B cell (primary cell): ENCODE measurements at regions of chr11 and their contacts with region 1.

Region 1: DNA sequence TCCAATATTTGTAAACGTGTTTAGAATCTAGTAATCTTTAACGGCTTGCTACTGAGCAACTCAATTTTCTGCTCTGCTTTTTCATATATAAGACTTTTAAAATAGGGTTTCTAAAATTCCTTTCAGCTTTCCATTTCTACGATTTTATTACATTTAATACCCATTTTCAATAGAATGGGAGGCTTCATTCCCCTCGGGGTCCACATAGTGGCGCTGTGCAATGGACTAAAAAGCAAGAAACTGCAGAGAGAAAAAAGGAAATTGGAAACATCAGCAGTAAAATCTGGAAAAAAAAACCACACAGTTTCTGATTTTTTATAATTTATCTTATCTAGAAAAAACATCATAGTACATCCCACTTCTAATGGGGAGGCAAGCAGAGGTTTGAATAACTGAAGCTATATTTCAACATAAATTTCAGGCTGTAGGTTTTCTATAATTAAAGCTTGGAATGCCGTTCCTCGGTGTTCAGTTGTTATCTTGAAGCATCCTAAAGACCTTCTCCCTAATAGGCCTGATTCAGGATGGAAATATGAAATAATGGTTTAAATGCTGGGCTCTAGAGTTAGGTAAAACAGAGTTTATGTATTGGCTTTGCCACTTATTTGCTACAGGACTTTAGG is 18.7 kb upstream of the JHY start:
- DNase-seq: peak; percentile 56
- ATAC-seq: peak; percentile 31
- H3K4me3 ChIP-seq: no peak overlapping the region
- H3K4me3 Mint-ChIP-seq: no peak overlapping the region
- H3K27ac ChIP-seq: no peak overlapping the region
- H3K27ac Mint-ChIP-seq: no peak overlapping the region
- H3K4me1 ChIP-seq: peaks cover 0 to 8% of the 10 kb centered on the region in 2 donors
- H3K4me1 Mint-ChIP-seq: peaks cover 10% of the 10 kb centered on the region
- H3K27me3 ChIP-seq: peaks cover 0 to 24% (median 6%) of the 10 kb centered on the region in 4 experiments
- H3K27me3 Mint-ChIP-seq: peaks cover 60% of the 10 kb centered on the region
- CTCF ChIP-seq: peak; percentile 94

Region 2: GRCh38 chr11:122598971-122599370 is 264.8 kb before region 1 on chr11:
- CTCF ChIA-PET with region 1: no interaction called
- POLR2A ChIA-PET with region 1: no interaction called
- intact Hi-C with region 1: no loop called
- DNase-seq: no peak
- ATAC-seq: no peak
- H3K4me3 ChIP-seq: no peak overlapping the region
- H3K4me3 Mint-ChIP-seq: no peak overlapping the region
- H3K27ac ChIP-seq: no peak overlapping the region
- H3K27ac Mint-ChIP-seq: no peak overlapping the region
- H3K4me1 ChIP-seq: no peaks in the 10 kb centered on the region
- H3K4me1 Mint-ChIP-seq: no peaks in the 10 kb centered on the region
- H3K27me3 ChIP-seq: peaks cover 0 to 8% (median 1%) of the 10 kb centered on the region in 4 experiments
- H3K27me3 Mint-ChIP-seq: peaks cover 26% of the 10 kb centered on the region
- CTCF ChIP-seq: no peak

Region 3: GRCh38 chr11:122808478-122808869 is 55.3 kb before region 1 on chr11:
- CTCF ChIA-PET with region 1: no interaction called
- POLR2A ChIA-PET with region 1: no interaction called
- intact Hi-C with region 1: no loop called
- DNase-seq: peak; percentile 33
- ATAC-seq: no peak
- H3K4me3 ChIP-seq: peak overlapping the region in 2 of 5 experiments; percentile 1 to 10
- H3K4me3 Mint-ChIP-seq: peak overlapping the region; percentile 36
- H3K27ac ChIP-seq: no peak overlapping the region
- H3K27ac Mint-ChIP-seq: peak overlapping the region; percentile 1
- H3K4me1 ChIP-seq: peaks cover 34 to 39% of the 10 kb centered on the region in 2 donors
- H3K4me1 Mint-ChIP-seq: peaks cover 48% of the 10 kb centered on the region
- H3K27me3 ChIP-seq: no peaks in the 10 kb centered on the region
- H3K27me3 Mint-ChIP-seq: no peaks in the 10 kb centered on the region
- CTCF ChIP-seq: no peak

Region 4: DNA sequence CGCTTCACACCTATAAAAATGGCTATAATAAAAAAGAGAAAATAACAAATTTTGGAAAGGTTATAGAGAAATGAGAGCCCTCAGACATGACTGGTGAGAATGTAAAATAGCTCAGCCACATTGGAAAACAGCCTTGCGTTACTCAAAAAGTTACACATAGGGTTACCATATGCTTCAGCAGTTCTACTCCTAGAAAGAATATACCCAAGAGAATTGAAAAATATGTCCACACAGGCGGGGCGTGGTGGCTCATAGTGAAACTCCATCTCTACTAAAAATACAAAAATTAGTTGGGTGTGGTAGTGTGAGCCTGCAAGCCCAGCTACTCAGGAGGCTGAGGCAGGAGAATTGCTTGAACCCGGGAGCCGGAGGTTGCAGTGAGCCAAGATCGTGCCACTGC is 11.2 kb after region 1 on chr11:
- CTCF ChIA-PET with region 1: interaction called, 10 read pairs
- POLR2A ChIA-PET with region 1: no interaction called
- intact Hi-C with region 1: no loop called
- DNase-seq: no peak
- ATAC-seq: no peak
- H3K4me3 ChIP-seq: no peak overlapping the region
- H3K4me3 Mint-ChIP-seq: no peak overlapping the region
- H3K27ac ChIP-seq: no peak overlapping the region
- H3K27ac Mint-ChIP-seq: no peak overlapping the region
- H3K4me1 ChIP-seq: peaks cover 0 to 3% of the 10 kb centered on the region in 2 donors
- H3K4me1 Mint-ChIP-seq: peaks cover 12% of the 10 kb centered on the region
- H3K27me3 ChIP-seq: peaks cover 0 to 3% (median 0%) of the 10 kb centered on the region in 4 experiments
- H3K27me3 Mint-ChIP-seq: peaks cover 15% of the 10 kb centered on the region
- CTCF ChIP-seq: no peak

Region 5: DNA sequence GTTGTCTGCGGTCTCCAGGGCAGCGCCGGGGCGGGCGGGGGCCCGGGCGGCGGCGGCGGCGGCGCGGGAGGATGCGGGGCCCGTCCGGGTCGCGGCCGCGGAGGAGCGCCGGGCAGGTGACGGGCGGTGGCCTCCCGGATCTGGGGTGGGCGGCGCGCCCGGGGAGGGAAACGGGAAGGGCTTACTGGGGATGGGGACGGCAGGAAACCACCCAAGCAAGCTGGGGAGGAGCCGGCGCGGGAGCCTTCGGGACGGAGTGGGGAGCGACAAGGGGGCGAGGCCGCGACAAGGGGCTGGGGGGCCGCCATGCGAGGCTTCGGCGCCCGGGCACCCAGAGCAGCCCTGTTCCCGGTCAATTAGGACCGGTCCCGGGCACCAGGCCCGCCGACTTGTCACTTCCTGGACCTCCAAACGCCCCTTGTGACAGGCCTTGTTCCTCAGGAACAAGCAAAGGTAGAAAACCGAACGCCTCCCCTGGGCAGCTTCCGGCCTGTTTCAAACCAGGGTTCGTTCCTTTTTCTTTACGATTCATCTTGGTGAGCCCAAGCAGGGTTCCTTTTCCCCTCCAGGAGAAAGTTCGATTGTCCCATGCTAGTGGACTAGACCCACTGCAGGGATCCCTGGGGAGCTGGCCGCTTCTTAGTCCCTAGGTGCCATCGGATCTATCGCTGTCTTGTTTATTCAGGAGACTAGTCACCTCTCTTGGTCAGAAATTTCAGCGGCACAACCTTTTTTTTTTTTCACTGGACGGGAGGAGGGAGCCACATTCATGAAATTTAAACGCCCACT is 19.2 kb after region 1 on chr11:
- CTCF ChIA-PET with region 1: interaction called, 13 read pairs
- POLR2A ChIA-PET with region 1: no interaction called
- intact Hi-C with region 1: no loop called
- DNase-seq: peak; percentile 68
- ATAC-seq: peak; percentile 72
- H3K4me3 ChIP-seq: peak overlapping the region; percentile 12 to 85 (median 77)
- H3K4me3 Mint-ChIP-seq: peak overlapping the region; percentile 89
- H3K27ac ChIP-seq: peak overlapping the region; percentile 74 to 80
- H3K27ac Mint-ChIP-seq: peak overlapping the region; percentile 85
- H3K4me1 ChIP-seq: peaks cover 10 to 12% of the 10 kb centered on the region in 2 donors
- H3K4me1 Mint-ChIP-seq: peaks cover 11% of the 10 kb centered on the region
- H3K27me3 ChIP-seq: peaks cover 0 to 19% (median 6%) of the 10 kb centered on the region in 4 experiments
- H3K27me3 Mint-ChIP-seq: peaks cover 22% of the 10 kb centered on the region
- CTCF ChIP-seq: no peak

Region 6: DNA sequence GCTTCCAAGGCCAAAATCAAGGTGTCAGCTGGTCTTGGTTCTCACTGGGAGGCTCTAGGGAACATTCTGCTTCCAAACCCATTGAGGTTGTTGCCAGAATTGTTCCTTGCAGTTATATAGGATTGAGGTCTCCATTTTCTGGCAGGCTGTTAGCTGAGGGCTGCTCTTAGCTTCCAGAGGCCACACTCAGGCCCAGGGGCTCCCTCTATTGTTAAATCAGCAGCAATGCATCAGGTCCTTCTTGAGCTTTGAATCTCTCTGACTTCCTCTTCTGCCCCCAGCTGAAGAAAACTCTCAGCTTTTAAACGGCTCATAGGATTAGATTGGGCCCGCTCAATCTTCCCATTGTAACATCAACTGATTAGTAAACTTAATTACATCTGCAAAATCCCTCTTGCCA is 157.2 kb after region 1 on chr11:
- CTCF ChIA-PET with region 1: interaction called, 128 read pairs
- POLR2A ChIA-PET with region 1: no interaction called
- intact Hi-C with region 1: loop called (anchors 1 kb)
- DNase-seq: peak; percentile 58
- ATAC-seq: peak; percentile 82
- H3K4me3 ChIP-seq: no peak overlapping the region
- H3K4me3 Mint-ChIP-seq: no peak overlapping the region
- H3K27ac ChIP-seq: no peak overlapping the region
- H3K27ac Mint-ChIP-seq: no peak overlapping the region
- H3K4me1 ChIP-seq: peaks cover 0 to 9% of the 10 kb centered on the region in 2 donors
- H3K4me1 Mint-ChIP-seq: peaks cover 7% of the 10 kb centered on the region
- H3K27me3 ChIP-seq: peaks cover 0 to 6% (median 2%) of the 10 kb centered on the region in 4 experiments
- H3K27me3 Mint-ChIP-seq: peaks cover 12% of the 10 kb centered on the region
- CTCF ChIP-seq: peak; percentile 67

Region 7: GRCh38 chr11:123054301-123055065 is 190.7 kb after region 1 on chr11:
- CTCF ChIA-PET with region 1: interaction called, 94 read pairs
- POLR2A ChIA-PET with region 1: no interaction called
- intact Hi-C with region 1: loop called (anchors 1 kb)
- DNase-seq: peak; percentile 79
- ATAC-seq: peak; percentile 87
- H3K4me3 ChIP-seq: no peak overlapping the region
- H3K4me3 Mint-ChIP-seq: peak overlapping the region; percentile 38
- H3K27ac ChIP-seq: no peak overlapping the region
- H3K27ac Mint-ChIP-seq: peak overlapping the region; percentile 85
- H3K4me1 ChIP-seq: peaks cover 35 to 46% of the 10 kb centered on the region in 2 donors
- H3K4me1 Mint-ChIP-seq: peaks cover 56% of the 10 kb centered on the region
- H3K27me3 ChIP-seq: no peaks in the 10 kb centered on the region
- H3K27me3 Mint-ChIP-seq: no peaks in the 10 kb centered on the region
- CTCF ChIP-seq: peak; percentile 83

Region 8: GRCh38 chr11:123062158-123062891 is 198.5 kb after region 1 on chr11:
- CTCF ChIA-PET with region 1: interaction called, 94 read pairs
- POLR2A ChIA-PET with region 1: no interaction called
- intact Hi-C with region 1: no loop called
- DNase-seq: peak; percentile 100
- ATAC-seq: peak; percentile 81
- H3K4me3 ChIP-seq: peak overlapping the region; percentile 88 to 100 (median 96)
- H3K4me3 Mint-ChIP-seq: peak overlapping the region; percentile 99
- H3K27ac ChIP-seq: peak overlapping the region; percentile 99 to 100
- H3K27ac Mint-ChIP-seq: peak overlapping the region; percentile 100
- H3K4me1 ChIP-seq: peaks cover 63 to 68% of the 10 kb centered on the region in 2 donors
- H3K4me1 Mint-ChIP-seq: peaks cover 69% of the 10 kb centered on the region
- H3K27me3 ChIP-seq: no peaks in the 10 kb centered on the region
- H3K27me3 Mint-ChIP-seq: no peaks in the 10 kb centered on the region
- CTCF ChIP-seq: no peak

Region 9: DNA sequence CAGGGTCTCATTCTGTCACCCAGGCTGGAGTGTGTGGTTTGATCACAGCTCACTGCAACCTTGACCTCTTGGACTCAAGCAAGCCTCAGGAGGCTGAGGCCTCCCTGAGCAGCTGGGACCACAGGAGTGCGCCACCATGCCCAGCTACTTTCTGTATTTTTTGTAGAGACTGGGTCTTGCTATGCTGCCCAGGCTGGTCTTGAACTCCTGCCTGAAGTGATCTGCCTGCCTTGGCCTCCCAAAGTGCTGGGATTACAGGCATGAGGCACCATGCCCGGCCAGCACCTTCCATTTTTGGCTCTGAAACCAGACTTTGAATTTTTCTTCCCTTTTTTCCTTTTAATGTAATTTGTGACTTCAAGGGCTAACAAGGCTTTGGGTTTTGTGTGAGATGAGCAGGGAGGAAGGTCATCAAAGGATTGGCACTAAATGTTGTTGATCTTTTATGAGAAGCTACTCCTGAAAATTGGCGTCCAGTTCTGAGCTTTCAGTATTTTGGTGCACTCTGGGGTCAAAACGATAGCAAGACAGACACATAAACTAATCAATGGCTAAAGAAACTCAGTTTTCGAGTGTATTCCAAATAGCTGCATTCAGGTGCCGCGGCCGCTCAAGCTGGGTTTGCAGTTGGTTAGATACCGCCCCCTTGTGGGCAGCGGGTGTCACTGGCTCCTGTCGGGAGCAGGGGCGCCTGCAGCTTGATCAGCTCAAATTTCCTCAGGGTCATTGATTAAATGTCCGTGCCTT is 383.1 kb after region 1 on chr11:
- CTCF ChIA-PET with region 1: interaction called, 12 read pairs
- POLR2A ChIA-PET with region 1: no interaction called
- intact Hi-C with region 1: no loop called
- DNase-seq: peak; percentile 73
- ATAC-seq: peak; percentile 81
- H3K4me3 ChIP-seq: no peak overlapping the region
- H3K4me3 Mint-ChIP-seq: peak overlapping the region; percentile 16
- H3K27ac ChIP-seq: no peak overlapping the region
- H3K27ac Mint-ChIP-seq: no peak overlapping the region
- H3K4me1 ChIP-seq: peaks cover 0 to 3% of the 10 kb centered on the region in 2 donors
- H3K4me1 Mint-ChIP-seq: peaks cover 5% of the 10 kb centered on the region
- H3K27me3 ChIP-seq: no peaks in the 10 kb centered on the region
- H3K27me3 Mint-ChIP-seq: peaks cover 16% of the 10 kb centered on the region
- CTCF ChIP-seq: peak; percentile 96